ENCODE measurements at regions of chr19 and their contacts with region 1.

Region 1: DNA sequence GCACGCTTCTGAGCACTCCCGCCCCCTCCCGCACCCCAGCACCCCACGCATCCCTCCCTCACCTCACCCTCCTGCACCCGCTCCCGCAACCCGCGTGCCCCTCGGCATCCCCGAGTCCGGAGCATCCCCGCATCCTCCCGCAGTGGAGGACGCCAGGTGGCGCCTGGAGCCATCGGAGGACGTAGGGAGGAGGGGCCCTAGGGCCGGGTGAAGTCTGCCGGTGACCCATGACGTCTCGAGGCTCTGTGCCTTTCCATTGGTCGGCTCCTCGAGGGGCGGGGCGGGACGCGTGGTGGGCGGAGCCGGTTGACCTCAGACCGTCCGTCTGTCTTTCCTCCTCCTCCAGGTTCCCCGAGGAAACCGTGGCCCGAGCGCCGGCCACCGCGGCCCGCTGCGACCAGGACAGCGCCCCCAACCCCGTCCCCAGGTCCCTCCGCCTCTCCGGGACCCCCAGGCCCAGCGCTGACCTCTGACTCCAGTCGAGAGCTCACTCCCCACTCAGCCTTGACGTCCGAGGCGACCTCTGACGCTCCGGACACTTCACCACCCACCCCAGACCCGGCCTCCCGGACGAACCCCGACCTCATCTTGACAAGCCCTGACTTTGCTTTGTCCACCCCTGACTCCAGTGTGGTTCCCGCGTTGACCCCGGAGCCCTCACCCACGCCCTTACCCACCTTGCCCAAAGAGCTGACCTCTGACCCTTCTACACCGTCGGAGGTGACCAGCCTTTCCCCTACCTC is 19.9 kb downstream of the SBK2 start:
- DNase-seq: peak; percentile 96
- ATAC-seq: peak; percentile 100
- H3K4me3 Mint-ChIP-seq: peak overlapping the region; percentile 54
- H3K27ac Mint-ChIP-seq: peak overlapping the region; percentile 9
- H3K4me1 Mint-ChIP-seq: peaks cover 3% of the 10 kb centered on the region
- H3K27me3 Mint-ChIP-seq: no peaks in the 10 kb centered on the region

Region 2: DNA sequence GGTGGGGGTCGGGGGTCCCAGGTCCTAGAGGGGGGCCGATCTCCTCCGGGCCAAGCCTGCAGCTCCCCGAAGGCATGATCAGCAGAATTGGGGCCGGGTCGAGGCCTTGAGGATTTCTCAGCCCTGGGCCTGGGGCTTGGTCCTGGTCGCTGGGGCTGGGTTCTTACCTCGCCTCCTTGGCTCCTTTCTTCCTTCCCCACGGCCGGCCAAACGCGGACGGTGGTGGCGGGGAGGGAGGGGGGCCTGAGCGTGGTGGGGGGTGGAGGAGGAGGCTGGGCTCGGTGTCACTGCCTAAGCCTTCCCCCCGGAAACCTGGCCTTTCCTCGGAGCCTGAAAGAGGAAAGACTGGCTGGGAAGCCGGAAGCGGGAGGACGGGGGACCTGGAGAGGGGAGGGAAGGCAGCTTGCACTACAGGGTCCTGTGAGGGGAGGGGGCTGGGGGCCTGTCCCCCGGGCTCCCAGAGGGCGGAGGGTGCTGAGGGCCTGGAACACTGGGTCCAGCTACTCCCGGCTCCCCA is 63.6 kb after region 1 on chr19 and contains the start of gene ZNF579:
- CTCF ChIA-PET with region 1: no interaction called
- POLR2A ChIA-PET with region 1: no interaction called
- intact Hi-C with region 1: loop called in 1 of 2 experiments (anchors 2 kb)
- DNase-seq: peak; percentile 89
- ATAC-seq: peak; percentile 79
- H3K4me3 Mint-ChIP-seq: peak within 1 kb of the TSS; percentile 83
- H3K27ac Mint-ChIP-seq: peak within 1 kb of the TSS; percentile 78
- H3K4me1 Mint-ChIP-seq: peaks cover 23% of the 10 kb centered on the region
- H3K27me3 Mint-ChIP-seq: no peaks in the 10 kb centered on the region
- total RNA-seq, gene ZNF579: 7.2 to 7.5 TPM

Region 3: GRCh38 chr19:55586976-55587668 is 70.1 kb after region 1 on chr19:
- CTCF ChIA-PET with region 1: no interaction called
- POLR2A ChIA-PET with region 1: no interaction called
- intact Hi-C with region 1: loop called in 1 of 2 experiments (anchors 1 kb)
- DNase-seq: peak; percentile 97
- ATAC-seq: peak; percentile 99
- H3K4me3 Mint-ChIP-seq: peak overlapping the region; percentile 71
- H3K27ac Mint-ChIP-seq: peak overlapping the region; percentile 37
- H3K4me1 Mint-ChIP-seq: peaks cover 20% of the 10 kb centered on the region
- H3K27me3 Mint-ChIP-seq: no peaks in the 10 kb centered on the region

Region 4: DNA sequence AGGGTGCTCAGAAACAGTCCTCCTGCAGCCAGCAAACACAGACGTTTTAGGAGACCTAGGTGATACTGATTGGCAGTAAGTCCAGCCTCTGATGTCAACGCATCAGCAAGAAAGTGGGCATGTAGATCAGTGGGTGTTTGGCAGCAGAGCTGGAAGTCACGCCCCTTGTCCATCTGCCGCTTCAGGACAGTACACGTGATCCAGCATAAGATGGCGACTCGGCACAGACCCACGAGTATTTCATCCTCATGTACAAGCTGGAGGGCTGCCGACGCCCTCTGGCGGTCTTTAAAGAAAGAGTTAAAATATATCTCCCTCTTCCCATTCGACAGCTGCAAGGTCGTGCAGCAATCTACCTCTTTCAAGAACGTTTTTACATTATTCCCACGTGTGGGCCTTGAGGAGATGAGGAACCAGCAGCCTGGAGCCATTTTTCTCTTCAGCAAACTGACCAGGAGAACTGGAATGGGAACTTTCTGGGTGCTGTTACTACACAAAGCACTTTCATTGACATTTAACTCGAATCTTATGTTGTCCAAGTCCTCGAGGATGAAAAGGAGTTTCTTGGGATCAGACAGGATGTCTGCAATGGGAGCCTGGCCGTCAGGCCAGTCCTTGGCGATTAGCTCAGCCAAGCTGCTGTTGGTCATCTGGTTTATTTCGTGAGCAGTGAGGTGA is 292.5 kb after region 1 on chr19:
- CTCF ChIA-PET with region 1: no interaction called
- POLR2A ChIA-PET with region 1: no interaction called
- intact Hi-C with region 1: loop called in 1 of 2 experiments (anchors 2 kb)
- DNase-seq: peak; percentile 71
- ATAC-seq: peak; percentile 97
- H3K4me3 Mint-ChIP-seq: no peak overlapping the region
- H3K27ac Mint-ChIP-seq: no peak overlapping the region
- H3K4me1 Mint-ChIP-seq: peaks cover 4% of the 10 kb centered on the region
- H3K27me3 Mint-ChIP-seq: peaks cover 15% of the 10 kb centered on the region

Measured in activated CD4-positive, alpha-beta T cell treated with anti-CD3 and anti-CD28 coated beads for 36 hours (primary cell).